Right ventricle myocardium superior (tissue), 1 donor: ENCODE measurements at regions of chrX and their contacts with region 1.

Region 1: GRCh38 chrX:121579016-121579760 is 531.8 kb downstream of the GLUD2 start:
- DNase-seq: no peak
- ATAC-seq: no peak

Region 2: DNA sequence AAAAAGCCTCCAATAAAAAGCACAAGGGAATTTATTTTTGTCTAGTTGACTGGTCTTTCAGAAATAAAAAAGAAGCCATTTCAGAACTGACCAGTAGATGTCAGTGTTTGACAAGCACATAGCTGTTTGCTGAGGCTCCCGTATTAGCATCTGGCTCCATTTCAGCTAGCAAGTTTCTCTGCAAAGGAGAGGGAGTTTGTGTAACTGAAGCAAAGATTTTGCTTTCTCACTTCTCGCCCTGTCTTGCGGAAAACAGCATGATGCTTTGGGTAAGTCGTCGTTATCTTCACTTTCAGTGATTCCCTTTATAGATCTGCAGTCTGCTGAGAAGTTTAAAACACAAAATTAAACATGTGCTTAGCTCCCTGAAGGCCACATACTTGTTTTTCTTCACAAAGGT is 789.1 kb before region 1 on chrX:
- intact Hi-C with region 1: loop called (anchors 5 kb)
- DNase-seq: no peak
- ATAC-seq: peak; percentile 76